ENCODE measurements at regions of chr19 and their contacts with region 1.

Region 1: DNA sequence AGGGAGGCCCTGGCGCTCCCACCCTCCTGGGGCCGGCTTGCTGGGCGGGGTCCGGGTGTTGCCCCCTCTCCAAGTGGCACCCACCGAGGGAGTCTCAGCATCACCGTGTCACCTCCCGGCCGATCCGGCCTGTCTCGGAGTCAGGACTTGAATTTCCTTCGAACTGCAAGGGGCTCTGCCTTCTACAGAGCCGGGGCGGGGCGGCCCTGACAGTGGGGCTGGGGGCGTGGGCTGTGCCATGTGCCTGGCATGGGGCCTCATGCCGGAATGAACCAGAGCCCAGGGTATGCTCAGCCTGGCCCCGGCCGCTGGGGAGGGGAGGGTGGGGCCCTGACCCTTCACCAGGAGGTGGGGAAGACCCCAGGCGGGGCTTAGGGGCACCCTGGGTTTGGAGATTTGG is 47.0 kb upstream of the TCF3 start:
- DNase-seq: no peak
- H3K4me3 ChIP-seq: no peak overlapping the region
- CTCF ChIP-seq: no peak

Region 2: DNA sequence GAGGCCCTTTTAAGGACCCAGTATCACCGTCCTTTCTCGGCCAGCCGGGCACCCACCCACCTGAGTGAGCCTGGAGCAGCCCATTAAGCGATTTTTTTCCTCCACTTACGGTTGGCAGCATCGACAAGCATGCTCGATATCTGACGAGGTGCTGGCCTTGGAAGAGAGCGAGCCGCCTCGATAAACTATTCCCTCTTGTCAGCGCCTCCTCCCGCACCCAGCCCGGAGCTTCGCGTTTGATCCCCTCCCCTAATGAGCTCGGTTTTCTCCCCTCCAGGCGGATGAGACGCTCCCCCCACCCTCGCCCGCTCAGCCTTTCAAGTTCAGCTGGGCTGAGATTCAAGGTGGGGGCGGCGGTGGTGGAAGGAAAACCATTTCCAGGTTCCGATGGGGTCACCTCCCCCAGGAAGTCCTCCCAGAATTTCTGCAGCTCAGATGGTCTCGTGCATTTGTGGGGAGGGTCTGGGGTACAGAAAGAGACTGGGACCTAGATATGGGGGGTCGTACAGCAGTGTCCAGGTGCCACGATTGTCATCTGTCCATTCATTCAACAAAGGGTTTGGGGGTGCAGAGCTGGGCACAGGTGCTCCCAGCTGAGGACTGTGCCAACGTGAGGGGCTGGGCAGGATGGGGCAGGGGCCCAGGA is 35.1 kb after region 1 on chr19:
- in situ Hi-C with region 1: loop called (anchors 5 kb)
- DNase-seq: no peak
- H3K4me3 ChIP-seq: no peak overlapping the region
- CTCF ChIP-seq: no peak

Measured in astrocyte of the cerebellum (primary cell).